ENCODE measurements at regions of chr5 and their contacts with region 1.

Region 1: DNA sequence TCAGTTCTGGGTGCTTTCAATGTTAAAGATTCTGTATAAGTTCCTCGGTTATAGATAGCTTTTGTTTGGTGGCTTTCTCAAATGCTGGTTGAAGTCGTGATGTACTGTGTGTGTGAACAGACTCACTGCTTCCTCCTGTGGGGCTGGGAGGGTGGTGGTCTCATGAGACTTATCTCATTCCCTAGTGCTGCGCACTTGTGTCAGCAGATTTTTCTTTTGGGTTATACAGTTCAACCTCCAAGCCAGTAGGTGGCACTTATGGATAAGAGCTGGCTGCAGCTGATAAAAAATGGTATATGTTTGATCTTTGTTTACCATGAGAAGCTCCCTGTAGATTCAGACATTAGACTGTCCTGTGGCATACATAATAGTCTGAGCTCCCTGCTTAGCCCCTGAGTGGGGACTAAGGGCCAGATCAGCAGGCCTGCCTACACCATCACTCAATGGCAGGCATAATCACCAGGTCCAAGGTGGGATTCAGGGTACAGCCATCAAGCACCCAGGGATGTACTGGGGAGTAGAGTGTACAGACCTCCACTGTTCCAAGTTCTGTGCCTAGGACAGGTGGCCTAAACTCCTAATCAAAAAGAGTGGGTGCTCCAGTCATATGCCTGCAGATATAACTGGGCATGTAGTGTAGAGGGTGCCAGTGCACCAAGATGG is 174.2 kb downstream of the OXCT1 start:
- DNase-seq: peak; percentile 60
- H3K4me3 ChIP-seq: no peak overlapping the region
- H3K27ac ChIP-seq: no peak overlapping the region
- H3K4me1 ChIP-seq: no peaks in the 10 kb centered on the region
- H3K27me3 ChIP-seq: no peaks in the 10 kb centered on the region
- CTCF ChIP-seq: peak; percentile 56

Region 2: DNA sequence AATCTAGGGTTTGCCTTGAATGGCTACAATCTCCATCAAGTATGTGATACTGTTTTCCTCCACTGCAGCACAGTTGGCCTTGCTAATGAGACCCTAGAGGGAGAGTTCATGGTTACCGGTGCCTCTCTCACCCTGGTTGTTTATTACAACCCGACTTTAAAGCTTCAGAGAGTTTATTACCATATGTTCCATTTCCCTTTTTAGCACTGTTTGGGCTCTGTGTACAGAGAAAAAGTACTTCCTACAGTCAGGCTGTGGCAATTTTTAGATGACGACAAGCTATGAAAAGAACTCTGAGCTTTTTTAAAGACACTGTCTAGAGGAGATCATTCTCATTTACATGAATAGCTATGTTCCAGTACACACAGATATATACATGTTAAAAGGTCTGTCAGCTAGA is 136.9 kb before region 1 on chr5:
- CTCF ChIA-PET with region 1: no interaction called
- POLR2A ChIA-PET with region 1: no interaction called
- intact Hi-C with region 1: no loop called
- DNase-seq: no peak
- H3K4me3 ChIP-seq: no peak overlapping the region
- H3K27ac ChIP-seq: no peak overlapping the region
- H3K4me1 ChIP-seq: no peaks in the 10 kb centered on the region
- H3K27me3 ChIP-seq: no peaks in the 10 kb centered on the region
- CTCF ChIP-seq: no peak

Region 3: GRCh38 chr5:42057254-42057690 is 361.2 kb after region 1 on chr5:
- CTCF ChIA-PET with region 1: interaction called, 4 read pairs
- POLR2A ChIA-PET with region 1: no interaction called
- intact Hi-C with region 1: loop called (anchors 5 kb)
- DNase-seq: peak; percentile 58
- H3K4me3 ChIP-seq: no peak overlapping the region
- H3K27ac ChIP-seq: no peak overlapping the region
- H3K4me1 ChIP-seq: no peaks in the 10 kb centered on the region
- H3K27me3 ChIP-seq: peaks cover 11% of the 10 kb centered on the region
- CTCF ChIP-seq: peak; percentile 82